HCT116 (cell line): ENCODE measurements at regions of chrX and their contacts with region 1.

Region 1: GRCh38 chrX:28058901-28059300 is 77.7 kb upstream of the DCAF8L1 start:
- DNase-seq: no peak
- ATAC-seq: no peak
- H3K4me3 ChIP-seq: no peak overlapping the region
- H3K27ac ChIP-seq: no peak overlapping the region
- H3K4me1 ChIP-seq: no peaks in the 10 kb centered on the region
- H3K27me3 ChIP-seq: no peaks in the 10 kb centered on the region
- CTCF ChIP-seq: no peak
- POLR2A ChIP-seq: no peak
- RAD21 ChIP-seq: no peak

Region 2: DNA sequence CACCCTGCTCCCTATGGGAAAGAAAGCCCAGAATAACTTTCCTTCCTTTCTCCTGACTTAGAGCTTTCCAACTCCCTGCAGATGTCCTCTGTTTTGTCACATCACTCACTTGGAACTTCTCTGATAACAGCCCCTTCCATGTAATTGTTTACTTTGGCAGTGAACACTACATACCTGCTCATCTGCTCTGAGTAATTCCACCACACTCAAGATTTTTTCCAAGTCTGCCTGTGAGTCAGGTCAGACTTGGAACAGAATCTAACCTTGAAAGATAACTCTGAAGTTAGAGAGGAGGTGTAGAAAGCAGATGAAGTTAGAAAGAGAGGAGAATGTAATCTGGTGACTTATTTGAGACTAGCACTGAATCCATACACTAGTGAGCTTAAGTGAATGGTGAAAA is 243.7 kb before region 1 on chrX:
- CTCF ChIA-PET with region 1: no interaction called
- POLR2A ChIA-PET with region 1: no interaction called
- RAD21 ChIA-PET with region 1: no interaction called
- intact Hi-C with region 1: no loop called
- DNase-seq: peak; percentile 3
- ATAC-seq: peak; percentile 47; the same call in 1 of the 2 replicates
- H3K4me3 ChIP-seq: no peak overlapping the region
- H3K27ac ChIP-seq: no peak overlapping the region
- H3K4me1 ChIP-seq: peaks cover 0 to 8% of the 10 kb centered on the region in 2 experiments; a peak in 3 of 4 replicates
- H3K27me3 ChIP-seq: no peaks in the 10 kb centered on the region
- CTCF ChIP-seq: no peak
- POLR2A ChIP-seq: no peak
- RAD21 ChIP-seq: no peak

Region 3: GRCh38 chrX:27933361-27933760 is 125.5 kb before region 1 on chrX:
- CTCF ChIA-PET with region 1: no interaction called
- POLR2A ChIA-PET with region 1: no interaction called
- RAD21 ChIA-PET with region 1: no interaction called
- intact Hi-C with region 1: no loop called
- DNase-seq: no peak
- ATAC-seq: no peak
- H3K4me3 ChIP-seq: no peak overlapping the region
- H3K27ac ChIP-seq: no peak overlapping the region
- H3K4me1 ChIP-seq: no peaks in the 10 kb centered on the region
- H3K27me3 ChIP-seq: no peaks in the 10 kb centered on the region
- CTCF ChIP-seq: no peak
- POLR2A ChIP-seq: no peak
- RAD21 ChIP-seq: no peak

Region 4: DNA sequence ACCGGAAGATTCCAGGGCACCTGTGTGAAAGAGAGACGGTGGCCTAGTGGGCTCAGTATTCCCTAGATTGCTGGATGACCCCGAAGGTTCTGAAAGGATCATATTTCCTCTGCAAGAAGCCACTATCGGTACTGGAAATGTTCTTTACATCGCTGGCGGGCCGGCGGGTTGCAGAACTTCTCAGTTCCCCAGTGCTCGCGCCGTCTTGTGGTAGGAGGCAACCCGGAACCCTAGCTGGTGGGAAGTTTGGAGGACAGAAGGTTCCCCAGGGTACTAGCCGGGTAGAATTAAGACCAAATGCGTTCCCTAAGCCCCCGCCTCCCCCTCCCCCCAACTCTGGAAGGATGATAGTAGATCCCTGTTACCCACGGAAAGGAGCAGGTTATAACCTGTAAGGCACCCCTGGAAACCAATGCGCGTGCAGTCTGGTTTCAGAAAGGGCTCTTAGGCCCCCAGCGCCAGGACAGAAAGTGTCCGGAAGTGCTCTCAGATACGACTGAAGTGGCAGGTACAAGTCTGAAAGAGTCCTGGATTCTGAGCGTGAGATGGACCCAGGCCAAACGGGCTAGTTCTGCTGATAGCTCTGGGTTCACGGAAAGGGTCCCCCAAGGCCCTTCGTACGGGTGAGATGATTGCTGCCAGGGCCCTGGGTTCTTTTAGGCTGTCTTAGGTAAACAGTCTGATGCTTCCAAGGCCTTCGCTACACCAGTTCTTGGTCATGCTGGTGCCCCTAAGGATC is 15.9 kb before region 1 on chrX:
- CTCF ChIA-PET with region 1: no interaction called
- POLR2A ChIA-PET with region 1: no interaction called
- RAD21 ChIA-PET with region 1: no interaction called
- intact Hi-C with region 1: loop called (anchors 1 kb)
- DNase-seq: no peak
- ATAC-seq: no peak
- H3K4me3 ChIP-seq: no peak overlapping the region
- H3K27ac ChIP-seq: no peak overlapping the region
- H3K4me1 ChIP-seq: no peaks in the 10 kb centered on the region
- H3K27me3 ChIP-seq: no peaks in the 10 kb centered on the region
- CTCF ChIP-seq: no peak
- POLR2A ChIP-seq: no peak
- RAD21 ChIP-seq: no peak

Region 5: GRCh38 chrX:29841750-29842149 is 1782.8 kb after region 1 on chrX:
- CTCF ChIA-PET with region 1: no interaction called
- POLR2A ChIA-PET with region 1: no interaction called
- RAD21 ChIA-PET with region 1: no interaction called
- intact Hi-C with region 1: no loop called
- DNase-seq: no peak
- ATAC-seq: no peak
- H3K4me3 ChIP-seq: no peak overlapping the region
- H3K27ac ChIP-seq: no peak overlapping the region
- H3K4me1 ChIP-seq: no peaks in the 10 kb centered on the region
- H3K27me3 ChIP-seq: no peaks in the 10 kb centered on the region
- CTCF ChIP-seq: no peak
- POLR2A ChIP-seq: no peak
- RAD21 ChIP-seq: no peak